GM23248 (cell line): ENCODE measurements at regions of chr13 and their contacts with region 1.

Region 1: DNA sequence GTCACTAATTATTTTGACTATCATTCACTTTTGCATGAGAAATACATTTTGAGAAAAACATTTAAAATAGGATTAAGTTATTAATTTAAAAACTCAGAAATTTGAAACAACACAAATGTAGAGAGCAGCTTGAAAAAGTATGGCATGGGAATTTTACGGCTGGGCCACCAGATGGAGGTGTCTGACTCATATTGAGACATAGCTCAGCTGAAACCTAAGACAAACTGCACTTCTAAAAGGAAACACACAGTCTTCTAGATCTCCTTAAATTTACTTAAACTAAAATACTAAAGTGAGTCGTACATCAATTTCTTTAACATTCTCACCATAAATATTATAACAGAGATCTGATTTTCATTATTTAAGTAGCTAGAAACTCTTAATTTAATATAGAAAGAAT is 41.9 kb upstream of the POSTN start:
- DNase-seq: peak; percentile 84
- H3K4me3 ChIP-seq: no peak overlapping the region
- H3K27ac ChIP-seq: no peak overlapping the region
- H3K4me1 ChIP-seq: peaks cover 9% of the 10 kb centered on the region
- H3K27me3 ChIP-seq: no peaks in the 10 kb centered on the region

Region 2: DNA sequence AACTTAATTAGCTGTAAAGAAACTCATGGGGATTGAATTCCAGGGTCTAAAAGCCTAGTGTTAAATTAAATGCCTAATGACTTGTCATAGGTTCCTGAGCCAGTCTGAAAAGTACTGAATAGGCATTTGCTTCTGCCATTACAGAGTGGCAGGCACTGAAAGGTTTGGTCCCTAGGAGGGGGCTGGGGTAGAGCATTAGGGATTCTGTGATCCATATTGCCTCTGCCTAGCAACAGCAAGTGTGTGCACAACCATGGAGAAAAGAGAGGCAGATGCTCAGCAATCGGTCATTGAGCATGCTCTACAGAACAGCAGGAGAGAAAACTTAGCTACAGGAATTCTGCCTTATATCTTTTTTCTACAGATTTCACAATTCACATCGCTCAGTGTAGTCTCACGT is 95.5 kb after region 1 on chr13:
- in situ Hi-C with region 1: no loop called
- DNase-seq: no peak
- H3K4me3 ChIP-seq: no peak overlapping the region
- H3K27ac ChIP-seq: no peak overlapping the region
- H3K4me1 ChIP-seq: peaks cover 6% of the 10 kb centered on the region
- H3K27me3 ChIP-seq: no peaks in the 10 kb centered on the region

Region 3: GRCh38 chr13:37816276-37816675 is 175.8 kb after region 1 on chr13:
- in situ Hi-C with region 1: no loop called
- DNase-seq: no peak
- H3K4me3 ChIP-seq: no peak overlapping the region
- H3K27ac ChIP-seq: no peak overlapping the region
- H3K4me1 ChIP-seq: no peaks in the 10 kb centered on the region
- H3K27me3 ChIP-seq: no peaks in the 10 kb centered on the region

Region 4: DNA sequence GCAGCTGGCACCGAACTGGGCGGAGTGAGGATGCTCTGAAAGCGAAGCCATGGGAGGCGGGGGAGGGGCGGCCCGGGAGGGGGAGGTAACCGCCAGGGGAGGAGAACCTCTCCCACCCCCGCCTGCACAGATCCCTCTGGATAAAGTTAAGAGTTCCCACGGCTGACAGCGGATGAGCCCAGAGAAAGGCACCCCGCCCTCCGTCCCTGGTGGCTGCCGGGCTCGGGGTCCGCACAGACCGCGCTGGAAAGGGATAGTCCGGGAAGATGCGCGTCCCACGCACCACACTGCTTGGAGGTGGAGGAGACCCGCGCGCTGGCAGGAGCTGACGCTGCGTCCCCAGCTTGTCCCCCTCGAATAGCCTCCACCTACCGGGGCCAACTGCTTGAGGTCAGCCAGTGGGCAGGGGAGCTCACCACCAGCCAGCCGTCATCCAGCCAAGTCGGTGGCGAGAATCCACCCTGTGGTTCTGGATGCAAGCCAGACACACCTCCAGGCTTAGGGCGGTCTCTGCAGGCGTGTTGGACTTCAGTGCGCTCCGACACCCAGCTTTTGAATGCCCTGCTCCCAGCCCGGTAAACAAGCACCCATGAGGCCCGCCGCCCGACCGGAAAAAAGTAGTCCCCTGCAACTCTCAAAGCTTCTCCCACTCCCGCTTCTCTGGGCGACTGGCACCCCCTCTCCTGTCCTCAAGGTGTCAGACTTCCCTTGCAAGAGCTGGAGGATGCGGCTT is 229.4 kb after region 1 on chr13 and contains the start of gene TRPC4:
- in situ Hi-C with region 1: loop called (anchors 10 kb)
- DNase-seq: peak; percentile 90
- H3K4me3 ChIP-seq: peak within 1 kb of the TSS; percentile 90
- H3K27ac ChIP-seq: peak within 1 kb of the TSS; percentile 38
- H3K4me1 ChIP-seq: peaks cover 30% of the 10 kb centered on the region
- H3K27me3 ChIP-seq: no peaks in the 10 kb centered on the region
- total RNA-seq, gene TRPC4: 8.6 and 10.5 TPM in 2 replicates

Region 5: DNA sequence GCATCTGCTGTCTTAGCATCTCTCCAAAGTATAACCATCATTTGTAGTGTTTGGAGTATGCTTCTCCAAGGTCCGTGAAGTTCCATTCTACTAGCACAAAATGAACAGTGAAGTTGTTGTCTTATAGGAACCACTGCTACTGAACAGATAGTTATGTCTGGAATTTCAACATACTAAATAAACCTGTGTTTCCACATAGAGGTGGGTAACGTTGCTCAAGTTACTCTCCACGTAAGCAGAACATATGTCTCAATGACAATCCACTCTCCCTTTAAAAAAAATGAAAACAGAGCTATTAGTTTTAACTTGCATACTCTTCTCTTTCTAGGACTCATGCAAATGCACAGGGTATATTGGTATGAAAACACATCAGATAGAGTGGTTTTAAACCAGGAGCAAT is 413.4 kb after region 1 on chr13:
- in situ Hi-C with region 1: loop called (anchors 25 kb)
- DNase-seq: no peak
- H3K4me3 ChIP-seq: no peak overlapping the region
- H3K27ac ChIP-seq: no peak overlapping the region
- H3K4me1 ChIP-seq: no peaks in the 10 kb centered on the region
- H3K27me3 ChIP-seq: no peaks in the 10 kb centered on the region

Region 6: GRCh38 chr13:38223089-38223488 is 582.6 kb after region 1 on chr13:
- in situ Hi-C with region 1: loop called (anchors 25 kb)
- DNase-seq: peak; percentile 35
- H3K4me3 ChIP-seq: no peak overlapping the region
- H3K27ac ChIP-seq: no peak overlapping the region
- H3K4me1 ChIP-seq: no peaks in the 10 kb centered on the region
- H3K27me3 ChIP-seq: no peaks in the 10 kb centered on the region

Region 7: GRCh38 chr13:38349390-38350113 is 709.1 kb after region 1 on chr13 and contains the start of gene UFM1:
- in situ Hi-C with region 1: loop called (anchors 25 kb)
- DNase-seq: peak; percentile 96
- H3K4me3 ChIP-seq: peak within 1 kb of the TSS; percentile 83
- H3K27ac ChIP-seq: peak within 1 kb of the TSS; percentile 95
- H3K4me1 ChIP-seq: peaks cover 22% of the 10 kb centered on the region
- H3K27me3 ChIP-seq: no peaks in the 10 kb centered on the region
- total RNA-seq, gene UFM1: 125 and 131 TPM in 2 replicates

Region 8: GRCh38 chr13:38530492-38530891 is 890.0 kb after region 1 on chr13:
- in situ Hi-C with region 1: loop called (anchors 25 kb)
- DNase-seq: peak; percentile 69
- H3K4me3 ChIP-seq: no peak overlapping the region
- H3K27ac ChIP-seq: no peak overlapping the region
- H3K4me1 ChIP-seq: no peaks in the 10 kb centered on the region
- H3K27me3 ChIP-seq: no peaks in the 10 kb centered on the region

Region 9: DNA sequence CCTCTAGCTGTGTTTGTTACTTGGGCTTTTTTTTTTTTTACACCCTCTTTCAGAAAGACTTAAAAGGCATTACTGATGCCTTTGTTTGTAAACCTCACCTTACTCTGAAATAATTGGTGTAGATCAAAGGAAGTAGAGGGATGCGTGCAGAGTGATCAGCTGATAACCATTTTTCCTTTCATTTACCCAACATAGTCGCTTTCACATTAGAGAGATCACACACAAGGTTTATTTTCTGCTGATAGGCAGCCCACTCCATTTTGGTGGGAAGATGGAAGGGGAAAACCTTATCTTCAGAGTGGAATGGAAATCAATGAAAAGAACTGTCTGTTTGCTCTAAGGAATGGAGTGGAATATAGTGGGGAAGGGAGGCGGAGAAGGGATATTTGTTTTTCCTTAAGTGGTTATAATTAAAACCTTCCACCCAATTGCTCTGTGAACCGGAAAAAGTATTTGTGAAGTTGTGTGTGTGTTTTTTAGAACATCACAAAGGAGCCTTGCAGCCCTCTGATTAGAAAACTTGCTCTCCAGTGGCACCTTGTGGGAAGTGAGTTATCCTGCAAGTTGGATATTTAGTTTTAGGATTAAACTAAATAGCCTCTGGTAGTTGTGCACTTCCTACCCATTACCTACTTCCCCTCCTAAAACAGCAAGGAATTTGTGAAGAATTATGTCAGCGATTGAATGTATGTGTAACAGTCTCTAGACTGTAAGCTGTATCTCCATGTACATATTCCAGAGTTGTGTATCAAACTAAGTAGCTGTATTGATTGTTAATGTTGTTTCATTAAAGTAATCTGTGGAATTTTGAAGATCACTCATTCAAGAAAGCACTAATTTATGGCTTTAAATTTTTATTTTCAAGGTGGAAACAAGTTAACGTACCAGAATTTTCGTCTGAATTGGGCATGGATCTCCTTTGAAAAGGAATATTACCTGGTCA is 1123.2 kb after region 1 on chr13:
- in situ Hi-C with region 1: loop called (anchors 25 kb)
- DNase-seq: peak; percentile 66
- H3K4me3 ChIP-seq: no peak overlapping the region
- H3K27ac ChIP-seq: no peak overlapping the region
- H3K4me1 ChIP-seq: no peaks in the 10 kb centered on the region
- H3K27me3 ChIP-seq: peaks cover 16% of the 10 kb centered on the region